ENCODE measurements at regions of chr3 and their contacts with region 1.

Region 1: GRCh38 chr3:115783938-115784738 is 160.8 kb downstream of the GAP43 start:
- DNase-seq: peak; percentile 90
- ATAC-seq: peak; percentile 80
- H3K4me3 ChIP-seq: peak overlapping the region; percentile 65
- H3K27ac ChIP-seq: peak overlapping the region; percentile 96
- H3K4me1 ChIP-seq: peaks cover 34% of the 10 kb centered on the region
- H3K27me3 ChIP-seq: no peaks in the 10 kb centered on the region
- CTCF ChIP-seq: peak; percentile 96

Region 2: GRCh38 chr3:115147329-115148141 is 636.6 kb before region 1 on chr3:
- CTCF ChIA-PET with region 1: interaction called, 4 read pairs
- POLR2A ChIA-PET with region 1: interaction called, 17 read pairs
- intact Hi-C with region 1: loop called (anchors 1 kb)
- DNase-seq: peak; percentile 99
- ATAC-seq: peak; percentile 83
- H3K4me3 ChIP-seq: peak overlapping the region; percentile 84
- H3K27ac ChIP-seq: peak overlapping the region; percentile 29
- H3K4me1 ChIP-seq: peaks cover 7% of the 10 kb centered on the region; the same call in 1 of the 2 replicates
- H3K27me3 ChIP-seq: no peaks in the 10 kb centered on the region
- CTCF ChIP-seq: no peak

Region 3: DNA sequence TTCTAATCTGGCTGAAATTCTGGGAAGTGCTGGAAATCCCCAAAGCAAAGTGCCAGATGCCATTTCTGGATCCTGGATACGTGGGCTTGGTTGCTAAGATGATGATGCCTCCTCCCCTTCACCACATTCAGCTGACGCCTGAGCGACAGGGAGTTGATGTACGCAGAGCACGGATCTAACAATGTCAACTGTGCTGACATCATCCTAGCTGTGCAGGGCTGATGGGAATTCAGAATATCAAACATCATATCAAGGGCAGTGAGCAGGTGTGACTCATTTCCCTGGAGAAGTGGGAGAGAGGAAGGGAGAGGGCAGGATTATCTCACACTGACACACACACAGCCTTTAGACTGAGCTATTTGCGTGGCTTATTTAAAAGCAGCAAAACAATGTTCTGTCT is 544.4 kb before region 1 on chr3:
- CTCF ChIA-PET with region 1: no interaction called
- POLR2A ChIA-PET with region 1: no interaction called
- intact Hi-C with region 1: loop called (anchors 5 kb)
- DNase-seq: peak; percentile 95
- ATAC-seq: peak; percentile 100
- H3K4me3 ChIP-seq: no peak overlapping the region
- H3K27ac ChIP-seq: peak overlapping the region; percentile 90
- H3K4me1 ChIP-seq: peaks cover 20% of the 10 kb centered on the region
- H3K27me3 ChIP-seq: no peaks in the 10 kb centered on the region
- CTCF ChIP-seq: no peak

Region 4: GRCh38 chr3:115692887-115693524 is 91.1 kb before region 1 on chr3:
- CTCF ChIA-PET with region 1: interaction called, 6 read pairs
- POLR2A ChIA-PET with region 1: no interaction called
- intact Hi-C with region 1: loop called (anchors 1 kb)
- DNase-seq: peak; percentile 90
- ATAC-seq: peak; percentile 96
- H3K4me3 ChIP-seq: no peak overlapping the region
- H3K27ac ChIP-seq: no peak overlapping the region
- H3K4me1 ChIP-seq: no peaks in the 10 kb centered on the region
- H3K27me3 ChIP-seq: no peaks in the 10 kb centered on the region
- CTCF ChIP-seq: peak; percentile 94

Region 5: GRCh38 chr3:115814778-115815380 is 30.7 kb after region 1 on chr3:
- CTCF ChIA-PET with region 1: interaction called, 18 read pairs
- POLR2A ChIA-PET with region 1: interaction called, 21 read pairs
- intact Hi-C with region 1: loop called (anchors 1 kb)
- DNase-seq: peak; percentile 94
- ATAC-seq: peak; percentile 89
- H3K4me3 ChIP-seq: no peak overlapping the region
- H3K27ac ChIP-seq: no peak overlapping the region
- H3K4me1 ChIP-seq: peaks cover 8% of the 10 kb centered on the region; the same call in 1 of the 2 replicates
- H3K27me3 ChIP-seq: no peaks in the 10 kb centered on the region
- CTCF ChIP-seq: peak; percentile 97

Region 6: GRCh38 chr3:115903843-115904242 is 119.7 kb after region 1 on chr3:
- CTCF ChIA-PET with region 1: no interaction called
- POLR2A ChIA-PET with region 1: no interaction called
- intact Hi-C with region 1: no loop called
- DNase-seq: peak; percentile 48
- ATAC-seq: no peak; the same call in 1 of the 2 replicates
- H3K4me3 ChIP-seq: no peak overlapping the region
- H3K27ac ChIP-seq: no peak overlapping the region
- H3K4me1 ChIP-seq: 0 out of 2 replicates have a peak, but pooled peaks cover 4% of the 10 kb centered on the region
- H3K27me3 ChIP-seq: no peaks in the 10 kb centered on the region
- CTCF ChIP-seq: no peak

Region 7: DNA sequence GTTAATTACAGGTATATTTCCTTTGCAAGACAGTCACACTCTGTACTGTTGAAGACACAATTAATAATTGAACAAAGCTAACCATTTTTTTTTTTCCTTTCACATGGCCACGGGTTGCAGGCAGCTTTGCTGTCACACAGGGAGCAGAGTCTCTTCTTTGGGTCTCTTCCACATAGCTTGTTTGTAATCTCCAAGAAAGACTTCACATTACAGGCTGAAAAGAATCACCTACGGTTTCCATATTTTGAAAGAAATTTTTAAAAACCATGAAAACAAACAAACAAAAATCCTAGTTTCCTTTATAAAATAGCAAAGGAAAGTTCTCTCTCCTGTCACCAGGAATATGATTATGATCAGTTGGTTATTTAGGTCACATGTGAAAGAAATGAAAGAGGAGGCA is 231.8 kb after region 1 on chr3:
- CTCF ChIA-PET with region 1: no interaction called
- POLR2A ChIA-PET with region 1: no interaction called
- intact Hi-C with region 1: no loop called
- DNase-seq: no peak
- ATAC-seq: no peak
- H3K4me3 ChIP-seq: no peak overlapping the region
- H3K27ac ChIP-seq: no peak overlapping the region
- H3K4me1 ChIP-seq: no peaks in the 10 kb centered on the region
- H3K27me3 ChIP-seq: no peaks in the 10 kb centered on the region
- CTCF ChIP-seq: no peak

Region 8: GRCh38 chr3:116059421-116060096 is 275.4 kb after region 1 on chr3:
- CTCF ChIA-PET with region 1: no interaction called
- POLR2A ChIA-PET with region 1: no interaction called
- intact Hi-C with region 1: no loop called
- DNase-seq: peak; percentile 88
- ATAC-seq: peak; percentile 100
- H3K4me3 ChIP-seq: no peak overlapping the region
- H3K27ac ChIP-seq: peak overlapping the region; percentile 61
- H3K4me1 ChIP-seq: peaks cover 11% of the 10 kb centered on the region; the same call in 1 of the 2 replicates
- H3K27me3 ChIP-seq: no peaks in the 10 kb centered on the region
- CTCF ChIP-seq: no peak

Measured in PC-3 (cell line).